A549 (cell line): ENCODE measurements at regions of chr5 and their contacts with region 1.

Region 1: DNA sequence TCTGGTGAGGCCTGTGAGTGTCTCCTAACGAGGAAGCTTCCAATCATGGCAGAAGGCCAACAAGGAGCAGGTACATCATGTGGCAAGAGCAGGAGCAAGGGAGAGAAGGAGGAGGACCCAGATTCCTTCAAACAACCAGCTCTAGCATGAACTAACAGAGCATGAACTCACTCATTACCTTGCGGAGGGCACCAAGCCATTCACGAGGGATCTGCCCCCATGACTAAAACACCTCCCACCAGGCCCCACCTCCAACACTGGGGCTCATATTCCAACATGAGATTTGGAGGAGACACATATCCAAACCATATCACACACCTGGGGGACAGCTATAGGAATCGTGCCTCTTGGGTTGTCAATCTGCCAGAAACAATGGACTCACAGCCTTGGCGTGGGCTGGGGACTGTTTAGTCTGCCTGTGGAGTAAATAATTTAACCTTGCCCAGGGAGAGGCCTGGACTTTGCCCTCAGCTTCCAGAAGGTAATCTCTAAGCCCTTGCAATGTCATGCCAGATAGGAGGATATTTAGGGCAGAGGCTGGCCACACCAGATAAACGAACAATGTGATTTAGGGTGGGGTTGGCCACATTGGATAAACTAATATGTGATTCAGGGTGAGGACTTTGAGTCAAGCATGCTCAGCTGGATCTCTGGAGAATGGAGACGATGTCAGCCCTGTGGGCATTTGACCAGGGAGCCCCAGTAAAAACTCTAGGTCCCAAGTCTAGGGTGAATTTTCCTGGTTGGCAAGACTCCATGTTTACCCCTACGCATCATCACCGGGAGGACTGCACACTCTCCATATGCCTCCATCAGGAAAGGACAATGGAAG is 13.6 kb upstream of the VDAC1 start:
- DNase-seq: peak; percentile 80 to 92
- ATAC-seq: peak; percentile 88 to 93
- H3K4me3 ChIP-seq: no peak overlapping the region
- H3K27ac ChIP-seq: peak overlapping the region; percentile 88 to 93
- H3K4me1 ChIP-seq: peaks cover 50% of the 10 kb centered on the region
- CTCF ChIP-seq: no peak
- EP300 ChIP-seq: peak; percentile 40 to 71; a peak in 2 of 5 replicates
- POLR2A ChIP-seq: no peak
- RAD21 ChIP-seq: peak in 1 of 2 experiments; percentile 18; a peak in 1 of 5 replicates

Region 2: DNA sequence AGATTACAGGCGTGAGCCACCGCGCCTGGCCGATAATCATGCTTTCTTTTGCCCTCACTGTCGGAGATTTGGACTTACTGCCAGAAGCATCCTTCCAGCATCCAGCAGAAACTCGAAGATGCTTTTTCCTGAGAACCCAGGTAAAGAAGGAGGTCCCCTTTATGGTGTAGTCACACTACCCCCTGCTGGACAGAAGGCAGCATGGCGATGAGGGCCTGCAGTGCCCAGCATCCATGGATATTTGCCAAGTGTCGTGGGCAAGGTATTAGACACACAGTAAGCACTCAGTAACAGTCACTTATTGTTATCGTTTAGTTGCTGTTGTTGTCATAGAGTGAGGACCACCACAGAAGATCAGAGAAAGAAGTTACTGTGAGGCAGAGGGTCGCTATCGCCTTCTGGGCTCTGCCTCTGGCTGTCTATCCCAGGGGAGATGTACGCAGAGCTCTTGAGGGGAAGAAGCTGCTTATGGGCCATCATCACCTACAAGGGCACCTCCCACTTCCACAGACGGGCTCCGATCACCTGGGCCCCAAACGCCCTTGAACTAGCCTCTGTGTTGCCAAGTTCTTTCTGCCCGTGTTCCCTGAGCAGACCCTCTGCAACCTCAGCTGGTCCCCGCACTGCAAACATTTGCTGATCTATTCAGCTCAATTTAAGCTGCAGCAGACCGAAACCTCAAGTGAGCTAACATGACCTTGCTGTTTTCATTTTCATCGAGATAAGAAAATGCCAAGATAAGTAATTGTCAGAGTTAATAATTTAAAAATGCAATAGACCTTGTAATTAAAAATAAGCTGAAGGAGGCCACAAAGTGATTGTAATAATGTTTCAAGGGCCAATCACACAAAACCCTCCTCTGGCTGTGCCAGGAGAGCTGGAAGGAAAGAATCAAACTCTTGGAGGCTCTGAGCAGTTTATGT is 73.8 kb before region 1 on chr5:
- CTCF ChIA-PET with region 1: no interaction called
- POLR2A ChIA-PET with region 1: no interaction called
- DNase-seq: peak; percentile 64 to 74
- ATAC-seq: peak; percentile 77 to 90; a peak in 4 of 6 replicates
- H3K4me3 ChIP-seq: no peak overlapping the region
- H3K27ac ChIP-seq: no peak overlapping the region
- H3K4me1 ChIP-seq: no peaks in the 10 kb centered on the region
- CTCF ChIP-seq: peak; percentile 58
- EP300 ChIP-seq: no peak
- POLR2A ChIP-seq: no peak
- RAD21 ChIP-seq: peak; percentile 81 to 91

Region 3: DNA sequence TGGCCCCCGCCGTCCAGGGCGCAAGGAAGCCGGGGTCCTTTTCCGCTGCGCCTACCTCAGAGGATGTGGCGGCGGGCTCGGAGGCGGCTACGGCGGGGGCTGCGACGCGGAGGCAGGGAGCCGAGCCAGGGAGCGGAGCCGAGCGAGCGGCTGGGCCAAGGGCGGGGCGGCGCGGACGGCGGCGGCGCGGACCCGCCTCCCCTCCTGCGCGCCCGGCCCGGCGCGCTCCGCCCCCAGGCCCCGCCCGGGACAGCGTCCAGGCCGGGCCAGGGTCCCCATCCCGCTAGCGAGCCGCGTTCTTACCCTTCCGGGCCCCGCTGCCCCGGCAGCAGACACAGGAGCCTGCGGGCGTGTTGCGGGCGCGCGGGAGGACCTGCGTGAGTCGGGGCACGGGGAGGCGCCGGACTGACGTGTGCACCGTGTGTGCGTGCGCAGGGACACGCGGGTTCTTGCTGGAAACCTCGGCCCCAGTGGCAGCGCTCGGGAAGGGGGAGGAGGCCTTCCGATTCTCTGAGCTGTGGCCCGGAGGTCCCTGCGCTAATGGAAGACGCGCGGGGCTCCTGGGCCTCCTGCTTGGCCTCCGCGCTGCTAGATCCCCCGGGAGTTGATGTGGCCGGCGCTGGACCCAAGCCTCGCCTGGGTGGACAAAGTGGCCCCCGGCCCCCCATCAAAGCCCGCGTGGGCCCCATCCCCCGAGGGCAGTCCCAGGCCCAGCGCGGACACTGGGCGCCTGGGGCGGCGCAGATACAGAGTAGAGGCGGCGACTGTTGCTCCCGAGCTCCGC is 13.6 kb before region 1 on chr5 and contains the start of gene VDAC1:
- CTCF ChIA-PET with region 1: interaction called, 13 read pairs
- POLR2A ChIA-PET with region 1: interaction called, 11 read pairs
- DNase-seq: peak; percentile 85 to 88
- ATAC-seq: peak; percentile 83 to 85
- H3K4me3 ChIP-seq: peak within 1 kb of the TSS; percentile 90
- H3K27ac ChIP-seq: peak within 1 kb of the TSS; percentile 98
- H3K4me1 ChIP-seq: peaks cover 56% of the 10 kb centered on the region
- CTCF ChIP-seq: no peak
- EP300 ChIP-seq: no peak
- POLR2A ChIP-seq: peak; percentile 84
- RAD21 ChIP-seq: no peak
- polyA plus RNA-seq, gene VDAC1: 300 and 369 TPM in 2 replicates

Region 4: GRCh38 chr5:134153657-134154056 is 135.3 kb after region 1 on chr5:
- CTCF ChIA-PET with region 1: no interaction called
- POLR2A ChIA-PET with region 1: no interaction called
- DNase-seq: no peak
- ATAC-seq: no peak
- H3K4me3 ChIP-seq: no peak overlapping the region
- H3K27ac ChIP-seq: no peak overlapping the region
- H3K4me1 ChIP-seq: no peaks in the 10 kb centered on the region
- CTCF ChIP-seq: no peak
- EP300 ChIP-seq: no peak
- POLR2A ChIP-seq: no peak
- RAD21 ChIP-seq: no peak

Region 5: GRCh38 chr5:134267366-134268018 is 249.1 kb after region 1 on chr5:
- CTCF ChIA-PET with region 1: no interaction called
- POLR2A ChIA-PET with region 1: no interaction called
- DNase-seq: peak in 1 of 2 experiments; percentile 40
- ATAC-seq: peak; percentile 83 to 88
- H3K4me3 ChIP-seq: no peak overlapping the region
- H3K27ac ChIP-seq: no peak overlapping the region
- H3K4me1 ChIP-seq: peaks cover 13% of the 10 kb centered on the region; the same call in 2 of the 3 replicates
- CTCF ChIP-seq: no peak
- EP300 ChIP-seq: no peak
- POLR2A ChIP-seq: no peak
- RAD21 ChIP-seq: no peak